Activated CD4-positive, alpha-beta T cell treated with anti-CD3 and anti-CD28 coated beads, Interleukin-2, amount 10 ng/mL, durations not matched to agents 24 days and 14 days (primary cell): ENCODE measurements at regions of chr6 and their contacts with region 1.

Region 1: DNA sequence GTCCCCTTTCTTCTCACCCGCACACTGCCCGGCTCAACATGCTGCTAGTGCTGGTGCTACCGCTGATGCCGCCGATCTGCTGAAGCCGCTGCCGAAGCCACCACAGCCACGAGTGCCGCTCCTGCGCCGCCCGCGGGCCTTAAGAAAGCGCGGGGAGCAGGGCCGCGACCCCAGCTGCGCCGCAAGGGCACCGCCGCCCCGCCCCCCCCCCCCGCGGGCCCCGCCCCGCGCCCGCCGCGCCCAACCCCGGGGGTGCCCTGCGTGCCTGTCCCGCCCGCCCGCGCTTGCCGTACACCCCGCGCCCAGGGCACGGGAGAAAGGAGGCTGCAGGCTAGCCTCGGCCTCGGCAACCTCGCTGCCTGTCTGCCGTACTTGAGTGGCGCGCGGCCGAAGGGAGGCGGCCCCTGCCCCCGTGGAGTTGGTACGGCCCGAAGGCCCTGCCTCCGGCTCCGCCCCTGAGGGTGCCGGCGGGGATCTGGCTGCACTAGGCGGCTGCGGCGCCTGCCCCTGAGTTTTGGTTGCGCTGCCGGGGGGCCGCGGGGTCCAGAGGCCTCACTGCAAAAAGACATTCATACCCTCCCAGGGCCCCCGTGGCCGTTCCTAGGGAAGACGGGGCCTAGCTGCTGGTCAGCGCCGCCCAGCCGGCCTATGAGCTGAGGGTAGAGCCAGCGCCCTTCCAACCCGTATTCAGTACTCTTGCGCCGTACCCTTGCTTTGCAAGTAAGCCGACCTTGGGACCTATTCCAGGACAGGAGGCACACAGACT is at the start of gene SOD2:
- DNase-seq: peak; percentile 95
- H3K4me3 Mint-ChIP-seq: peak within 1 kb of the TSS; percentile 84
- H3K27ac Mint-ChIP-seq: peak within 1 kb of the TSS; percentile 96
- H3K4me1 Mint-ChIP-seq: peaks cover 46% of the 10 kb centered on the region
- H3K27me3 Mint-ChIP-seq: no peaks in the 10 kb centered on the region
- total RNA-seq, gene SOD2: 83.0 and 88.3 TPM in 2 replicates

Region 2: DNA sequence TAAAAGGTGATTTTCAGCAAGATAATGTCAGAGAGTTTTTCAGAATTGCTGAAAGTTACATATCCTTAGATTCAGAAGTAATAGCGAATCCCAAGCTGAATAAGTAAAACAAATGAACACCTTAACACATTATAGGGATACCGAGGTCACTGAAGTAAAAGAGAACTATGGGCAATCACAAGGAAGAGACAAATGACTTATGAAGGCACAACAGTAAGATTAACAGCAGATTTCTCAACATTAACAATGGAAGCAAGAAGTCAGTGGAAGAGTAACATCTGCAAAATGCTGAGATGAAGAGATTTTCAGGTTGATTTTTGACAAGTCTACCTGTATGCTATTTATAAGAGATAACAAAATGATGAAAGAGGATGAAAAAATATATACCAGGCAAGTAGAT is 788.0 kb before region 1 on chr6:
- intact Hi-C with region 1: no loop called
- DNase-seq: no peak
- H3K4me3 Mint-ChIP-seq: no peak overlapping the region
- H3K27ac Mint-ChIP-seq: no peak overlapping the region
- H3K4me1 Mint-ChIP-seq: peaks cover 2% of the 10 kb centered on the region
- H3K27me3 Mint-ChIP-seq: peaks cover 1% of the 10 kb centered on the region

Region 3: DNA sequence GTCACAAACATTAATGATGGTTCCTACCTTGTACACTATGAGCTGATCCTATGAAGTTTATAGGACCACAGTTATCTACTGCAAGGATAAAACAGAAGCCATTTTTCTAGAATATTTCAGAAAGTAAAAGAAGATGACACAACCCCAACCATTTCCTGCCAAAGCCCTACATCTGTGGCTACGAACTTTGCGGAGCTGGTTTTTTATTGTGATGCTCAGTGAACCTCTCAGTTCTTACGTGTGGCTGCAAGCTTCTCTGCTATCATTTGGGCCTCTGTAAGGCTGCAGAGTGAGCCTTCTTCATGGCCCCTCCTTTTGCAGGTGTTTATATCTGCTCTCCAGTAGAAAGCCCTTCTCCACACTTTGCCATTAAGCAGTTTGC is 630.8 kb before region 1 on chr6:
- intact Hi-C with region 1: no loop called
- DNase-seq: peak; percentile 92
- H3K4me3 Mint-ChIP-seq: peak overlapping the region; percentile 62
- H3K27ac Mint-ChIP-seq: peak overlapping the region; percentile 94
- H3K4me1 Mint-ChIP-seq: peaks cover 83% of the 10 kb centered on the region
- H3K27me3 Mint-ChIP-seq: no peaks in the 10 kb centered on the region

Region 4: GRCh38 chr6:159679091-159680077 is 13.9 kb before region 1 on chr6:
- intact Hi-C with region 1: no loop called
- DNase-seq: no peak
- H3K4me3 Mint-ChIP-seq: peak overlapping the region; percentile 5
- H3K27ac Mint-ChIP-seq: peak overlapping the region; percentile 84
- H3K4me1 Mint-ChIP-seq: peaks cover 18% of the 10 kb centered on the region
- H3K27me3 Mint-ChIP-seq: peaks cover 1% of the 10 kb centered on the region

Region 5: DNA sequence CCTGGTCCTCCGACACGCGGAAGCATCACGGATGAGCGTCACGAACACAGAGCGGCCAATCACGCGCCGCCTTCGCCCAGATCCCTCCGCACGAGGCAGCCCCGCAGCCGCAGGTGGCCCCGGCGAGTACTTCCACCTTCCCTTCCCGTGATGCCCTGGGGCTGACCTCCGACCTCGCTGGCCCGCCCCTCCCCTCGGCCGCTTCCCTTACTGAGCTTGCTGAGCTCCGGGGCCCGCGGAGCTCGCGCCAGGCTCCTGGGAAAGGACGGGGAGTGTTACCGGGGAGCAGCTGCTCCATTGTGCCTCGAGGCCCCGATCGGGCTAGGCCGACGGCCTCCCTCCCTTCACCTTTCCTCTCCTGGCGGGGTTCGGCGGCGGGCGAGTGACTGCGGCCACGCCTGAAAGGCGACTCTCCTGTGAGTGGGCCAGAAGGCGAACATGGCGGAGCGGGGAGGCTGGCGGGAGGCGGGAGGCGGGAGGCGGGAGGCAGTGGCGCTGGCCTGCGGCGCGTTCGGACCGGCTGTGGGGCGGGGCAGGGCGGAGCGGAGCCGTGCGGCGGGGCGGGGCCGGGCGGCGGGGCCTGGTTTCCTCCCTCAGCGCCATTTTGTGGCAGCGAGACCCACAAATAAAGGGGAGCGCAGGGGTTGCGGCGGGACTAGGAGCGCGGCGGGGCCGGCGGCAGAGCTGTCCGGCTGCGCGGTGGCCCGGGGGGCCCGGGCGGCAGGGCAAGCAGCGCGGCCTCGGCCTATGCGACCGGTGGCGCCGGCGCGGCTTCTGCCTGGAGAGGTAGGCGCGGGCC is 33.8 kb after region 1 on chr6 and contains the start of gene WTAP:
- intact Hi-C with region 1: loop called (anchors 1 kb)
- DNase-seq: peak; percentile 98
- H3K4me3 Mint-ChIP-seq: peak within 1 kb of the TSS; percentile 96
- H3K27ac Mint-ChIP-seq: peak within 1 kb of the TSS; percentile 98
- H3K4me1 Mint-ChIP-seq: peaks cover 34% of the 10 kb centered on the region
- H3K27me3 Mint-ChIP-seq: no peaks in the 10 kb centered on the region
- total RNA-seq, gene WTAP: 107 and 109 TPM in 2 replicates

Region 6: DNA sequence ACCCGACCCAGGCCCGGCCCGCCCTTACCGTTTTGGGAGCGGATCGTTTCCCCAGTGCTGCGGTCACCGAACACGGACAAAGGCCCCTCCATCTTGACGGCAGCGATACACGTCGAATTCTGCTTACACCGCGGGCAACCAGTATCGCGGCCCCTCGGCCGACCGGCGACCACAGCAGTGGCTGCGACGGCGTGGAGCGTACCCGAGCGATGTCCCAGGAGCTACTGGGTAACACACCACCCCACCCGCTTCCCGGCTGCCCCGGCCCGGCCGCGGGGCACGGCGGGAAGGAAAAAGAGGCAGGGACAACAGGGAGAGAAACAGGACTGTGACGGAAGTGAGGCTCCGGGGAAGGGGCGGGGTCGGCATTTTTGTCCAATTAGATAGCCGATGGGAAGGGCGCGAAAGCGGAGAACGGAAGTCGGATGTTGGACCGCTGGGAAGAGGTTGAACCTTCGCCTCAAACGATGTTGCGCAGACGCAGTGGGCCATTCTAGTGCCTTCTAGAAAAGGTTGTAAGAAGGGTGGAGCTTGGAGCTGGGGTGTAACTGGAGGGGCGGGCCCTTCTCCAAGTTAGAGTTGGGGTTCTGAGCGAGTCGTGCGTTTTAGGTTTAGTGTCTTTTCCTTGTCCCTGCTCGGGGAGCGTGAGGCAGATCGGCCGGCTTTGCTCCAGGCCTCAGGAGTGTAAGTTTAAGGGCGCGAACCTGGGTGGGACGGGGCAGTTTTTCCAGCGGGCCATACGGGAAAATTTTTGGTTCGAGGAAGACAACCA is 96.3 kb after region 1 on chr6 and contains the start of gene TCP1:
- intact Hi-C with region 1: loop called (anchors 1 kb)
- DNase-seq: peak; percentile 100
- H3K4me3 Mint-ChIP-seq: peak within 1 kb of the TSS; percentile 97
- H3K27ac Mint-ChIP-seq: peak within 1 kb of the TSS; percentile 98
- H3K4me1 Mint-ChIP-seq: peaks cover 46% of the 10 kb centered on the region
- H3K27me3 Mint-ChIP-seq: peaks cover 3% of the 10 kb centered on the region
- total RNA-seq, gene TCP1: 528 and 531 TPM in 2 replicates

Region 7: GRCh38 chr6:159919011-159919511 is 225.8 kb after region 1 on chr6:
- intact Hi-C with region 1: no loop called
- DNase-seq: no peak
- H3K4me3 Mint-ChIP-seq: no peak overlapping the region
- H3K27ac Mint-ChIP-seq: no peak overlapping the region
- H3K4me1 Mint-ChIP-seq: peaks cover 2% of the 10 kb centered on the region
- H3K27me3 Mint-ChIP-seq: peaks cover 6% of the 10 kb centered on the region

Region 8: GRCh38 chr6:159941286-159942113 is 248.2 kb after region 1 on chr6:
- intact Hi-C with region 1: loop called (anchors 2 kb)
- DNase-seq: peak; percentile 82
- H3K4me3 Mint-ChIP-seq: no peak overlapping the region
- H3K27ac Mint-ChIP-seq: no peak overlapping the region
- H3K4me1 Mint-ChIP-seq: peaks cover 6% of the 10 kb centered on the region
- H3K27me3 Mint-ChIP-seq: peaks cover 18% of the 10 kb centered on the region

Region 9: GRCh38 chr6:160010067-160010466 is 316.8 kb after region 1 on chr6:
- intact Hi-C with region 1: loop called (anchors 5 kb)
- DNase-seq: no peak
- H3K4me3 Mint-ChIP-seq: no peak overlapping the region
- H3K27ac Mint-ChIP-seq: no peak overlapping the region
- H3K4me1 Mint-ChIP-seq: peaks cover 43% of the 10 kb centered on the region
- H3K27me3 Mint-ChIP-seq: no peaks in the 10 kb centered on the region